Uterus (tissue), 4 donors: ENCODE measurements at regions of chr1 and their contacts with region 1.

Region 1: GRCh38 chr1:43073490-43074230 is 98.4 kb downstream of the EBNA1BP2 start:
- DNase-seq: peak; percentile 68 to 77
- H3K4me3 ChIP-seq: no peak overlapping the region
- H3K27ac ChIP-seq: no peak overlapping the region
- H3K4me1 ChIP-seq: no peaks in the 10 kb centered on the region
- H3K27me3 ChIP-seq: no peaks in the 10 kb centered on the region
- CTCF ChIP-seq: peak; percentile 76 to 93 (median 91)
- POLR2A ChIP-seq: no peak

Region 2: GRCh38 chr1:42576935-42577334 is 496.7 kb before region 1 on chr1:
- intact Hi-C with region 1: loop called (anchors 10 kb)
- DNase-seq: no peak
- H3K4me3 ChIP-seq: no peak overlapping the region
- H3K27ac ChIP-seq: no peak overlapping the region
- H3K4me1 ChIP-seq: no peaks in the 10 kb centered on the region
- H3K27me3 ChIP-seq: no peaks in the 10 kb centered on the region
- CTCF ChIP-seq: no peak
- POLR2A ChIP-seq: no peak